GM10248 (cell line): ENCODE measurements at regions of chr16 and their contacts with region 1.

Region 1: GRCh38 chr16:18969050-18969854 is 14.5 kb upstream of the TMC7 start:
- DNase-seq: peak; percentile 85
- CTCF ChIP-seq: peak; percentile 96

Region 2: DNA sequence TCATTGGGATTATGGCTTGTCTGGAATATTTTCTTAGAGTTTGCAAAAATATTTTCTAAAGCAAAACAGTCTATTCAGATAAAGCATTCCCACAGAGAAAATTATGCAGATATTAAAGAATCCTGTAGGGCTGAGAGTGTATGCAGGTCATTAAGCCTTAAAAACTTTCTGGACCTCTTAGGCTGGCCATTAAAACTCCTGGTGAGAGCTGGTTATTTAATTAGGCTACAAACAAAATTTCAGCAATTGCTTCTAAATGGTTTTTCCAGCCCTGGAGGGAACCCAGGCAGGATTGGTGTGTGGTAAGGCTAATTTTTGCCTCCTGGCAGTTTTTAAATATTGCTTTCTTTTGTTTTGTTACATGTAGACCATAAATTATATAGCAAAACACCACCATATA is 15.7 kb before region 1 on chr16:
- CTCF ChIA-PET with region 1: interaction called, 21 read pairs
- POLR2A ChIA-PET with region 1: no interaction called
- DNase-seq: no peak
- CTCF ChIP-seq: no peak

Region 3: GRCh38 chr16:18959031-18959505 is 10.2 kb before region 1 on chr16:
- CTCF ChIA-PET with region 1: interaction called, 21 read pairs
- POLR2A ChIA-PET with region 1: no interaction called
- DNase-seq: no peak
- CTCF ChIP-seq: no peak

Region 4: DNA sequence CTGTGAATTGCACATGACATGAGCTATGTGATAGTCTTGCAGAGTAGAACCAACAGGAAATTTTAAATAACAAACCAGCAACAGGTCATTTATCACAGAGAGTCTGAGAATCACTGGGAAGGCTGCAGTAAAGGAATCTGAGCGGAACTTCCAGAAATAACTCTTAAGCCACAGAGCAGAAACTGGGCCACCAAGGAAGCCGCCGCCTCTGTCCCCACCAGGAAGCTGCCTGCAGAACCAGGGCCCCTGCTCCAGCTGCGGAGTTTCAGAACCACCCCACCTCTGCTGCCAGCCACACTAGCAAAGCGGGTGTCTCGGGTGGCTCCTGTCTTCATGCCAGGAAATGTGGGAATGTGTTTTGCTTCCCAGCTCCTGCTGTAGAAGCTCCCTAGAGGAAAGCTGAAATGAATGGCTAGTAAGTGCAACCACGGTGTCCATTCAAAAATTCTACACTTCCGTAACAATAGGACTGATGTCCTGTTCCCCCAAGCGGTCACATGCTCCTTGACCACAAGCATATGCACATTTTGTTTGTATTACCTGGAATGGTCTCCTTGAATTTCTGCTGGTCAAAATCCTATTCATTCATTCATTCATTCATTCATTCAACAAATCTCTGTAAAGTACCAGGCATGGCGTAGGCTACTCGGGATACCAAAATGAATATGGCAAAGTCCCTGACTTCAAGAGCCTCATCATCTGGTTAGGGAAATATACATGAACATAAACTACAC is 136.8 kb after region 1 on chr16:
- CTCF ChIA-PET with region 1: no interaction called
- POLR2A ChIA-PET with region 1: no interaction called
- DNase-seq: no peak
- CTCF ChIP-seq: no peak